Head of caudate nucleus (tissue), 42 donors: ENCODE measurements at regions of chr11 and their contacts with region 1.

Region 1: DNA sequence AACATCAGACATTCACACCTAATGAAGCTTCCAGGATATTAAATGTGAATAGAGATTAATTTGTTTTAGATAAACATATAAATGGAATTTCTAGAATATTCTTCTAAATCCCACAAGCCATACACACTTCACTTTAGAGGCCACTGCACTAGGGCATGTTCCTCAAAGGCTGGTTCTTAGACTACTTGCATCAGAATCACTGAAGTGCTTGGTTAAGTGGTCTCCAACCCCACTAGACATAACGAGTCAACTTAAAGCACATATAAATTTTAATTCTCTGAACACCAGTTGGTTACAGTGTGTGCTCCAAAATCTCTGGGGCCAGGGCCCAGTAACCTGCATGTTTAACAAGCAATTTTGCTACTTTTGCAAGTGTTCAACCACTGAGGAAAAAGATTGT is 7.9 kb upstream of the ALKBH8 start:
- DNase-seq: no peak

Region 2: GRCh38 chr11:107689317-107690202 is 116.1 kb after region 1 on chr11:
- intact Hi-C with region 1: loop called (anchors 5 kb)
- DNase-seq: peak; percentile 39 to 91 (median 76)

Region 3: DNA sequence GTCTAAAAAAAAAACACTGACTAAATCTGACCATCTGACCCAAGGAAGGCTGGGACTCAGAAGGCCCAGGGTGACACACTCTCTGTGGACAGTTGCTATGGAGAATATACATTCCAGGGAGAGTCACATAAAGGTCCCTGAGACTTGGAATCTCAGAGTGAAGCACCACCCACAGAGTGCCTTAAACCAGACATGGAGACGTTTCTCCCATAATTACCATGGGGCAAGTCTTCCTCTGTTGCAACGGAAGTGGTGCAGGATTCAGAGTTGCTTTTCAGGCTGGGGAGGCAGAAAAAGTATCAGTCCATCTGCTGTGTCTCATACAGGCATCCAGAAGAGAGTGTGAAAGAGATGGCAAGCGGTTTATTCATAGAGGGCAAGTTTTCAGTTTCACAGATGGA is 197.1 kb after region 1 on chr11:
- intact Hi-C with region 1: loop called (anchors 10 kb)
- DNase-seq: peak in 1 of 42 donors; percentile 18